Caki2 (cell line): ENCODE measurements at regions of chr1 and their contacts with region 1.

Region 1: GRCh38 chr1:222732216-222733159 is 4.5 kb upstream of the FAM177B start:
- DNase-seq: no peak

Region 2: GRCh38 chr1:222852326-222852725 is 119.8 kb after region 1 on chr1:
- in situ Hi-C with region 1: no loop called
- DNase-seq: no peak

Region 3: DNA sequence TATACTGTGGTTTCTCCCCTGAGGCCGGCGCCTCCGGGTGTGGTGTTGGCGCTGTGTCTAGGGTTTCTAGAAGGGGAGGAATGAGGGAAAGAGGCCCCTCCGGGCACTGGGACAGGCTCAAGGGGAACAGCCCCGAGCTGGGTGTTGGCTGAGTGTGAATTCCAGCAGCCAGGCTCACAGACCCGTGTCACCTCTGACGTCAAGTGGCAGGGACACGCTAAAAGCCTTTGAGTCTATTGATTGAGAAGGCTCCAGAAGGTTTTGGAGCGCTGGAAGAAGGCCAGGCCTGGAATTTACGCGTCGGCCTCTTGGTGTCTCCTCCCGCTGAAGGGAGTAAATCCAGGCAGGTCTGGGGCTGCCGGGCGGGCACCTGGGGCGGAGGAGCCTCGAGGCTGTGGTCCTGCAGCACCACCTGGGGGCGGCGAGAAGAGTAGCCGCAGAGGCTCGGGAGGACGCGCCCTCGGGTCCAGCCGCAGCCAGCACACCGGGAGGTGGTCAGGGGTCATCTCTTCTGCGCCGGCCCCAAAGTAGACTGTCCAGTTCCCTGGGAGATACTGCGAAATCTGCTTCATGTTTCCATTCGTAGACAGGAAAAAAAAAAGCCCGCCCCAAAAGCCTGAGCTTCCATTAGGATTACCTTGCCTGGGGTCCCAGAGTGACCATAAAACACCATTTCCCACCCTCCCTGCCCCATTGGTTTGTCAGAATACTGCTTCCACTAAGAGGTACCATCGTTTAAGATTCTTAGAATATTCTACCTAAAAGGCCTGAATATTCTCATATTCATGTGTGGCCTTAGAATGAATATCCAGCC is 348.9 kb after region 1 on chr1:
- in situ Hi-C with region 1: loop called (anchors 25 kb)
- DNase-seq: peak; percentile 97